Activated CD4-positive, alpha-beta memory T cell treated with anti-CD3 and anti-CD28 coated beads, Interleukin-2, amount 10 ng/mL, durations not matched to agents 7 days and 5 days (primary cell): ENCODE measurements at regions of chr15 and their contacts with region 1.

Region 1: DNA sequence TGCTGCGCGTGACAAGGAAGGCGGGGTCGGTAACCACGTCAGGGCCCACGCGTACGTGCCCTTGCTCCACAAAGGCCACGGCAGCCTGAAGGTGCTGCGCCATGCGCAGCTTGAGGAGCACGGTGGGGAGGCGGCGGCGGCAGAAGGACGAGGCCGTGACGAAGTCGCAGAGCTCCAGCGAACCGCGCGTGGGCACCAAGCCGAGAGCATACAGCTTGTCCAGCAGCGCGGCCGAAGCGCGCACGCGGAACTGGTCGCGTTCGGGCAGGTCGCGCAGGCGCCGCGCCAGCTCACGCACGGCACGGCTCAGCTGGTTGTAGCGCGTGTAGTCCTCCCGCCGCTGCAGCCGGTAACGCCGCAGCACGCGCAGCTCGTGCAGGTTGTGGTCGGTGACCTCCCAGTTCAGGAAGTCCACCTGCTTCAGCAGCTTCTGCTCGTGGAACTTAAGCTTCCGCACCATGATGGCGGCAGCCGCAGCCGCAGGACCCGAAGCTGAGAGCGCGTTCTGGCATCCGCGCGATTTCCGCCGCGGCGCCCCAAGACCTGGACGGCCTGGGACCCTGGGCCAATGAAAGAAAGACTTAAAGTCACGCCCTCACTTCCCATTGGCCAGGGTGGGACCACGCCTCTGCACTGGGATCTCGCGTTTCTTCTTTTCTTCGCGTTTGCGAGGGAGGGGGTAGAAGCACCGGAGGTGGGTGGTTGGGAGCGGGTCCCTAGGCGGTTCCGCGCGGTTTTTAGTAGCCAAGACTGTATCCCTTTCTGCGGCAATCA is at the start of gene IMP3:
- DNase-seq: peak; percentile 96
- H3K4me3 Mint-ChIP-seq: peak within 1 kb of the TSS; percentile 86
- H3K27ac Mint-ChIP-seq: peak within 1 kb of the TSS; percentile 94
- H3K4me1 Mint-ChIP-seq: peaks cover 43% of the 10 kb centered on the region
- H3K27me3 Mint-ChIP-seq: no peaks in the 10 kb centered on the region
- total RNA-seq, gene IMP3: 72.3 to 75.5 TPM

Region 2: GRCh38 chr15:75508840-75509532 is 130.9 kb before region 1 on chr15:
- CTCF ChIA-PET with region 1: interaction called, 46 read pairs
- POLR2A ChIA-PET with region 1: interaction called, 29 read pairs
- DNase-seq: no peak
- H3K4me3 Mint-ChIP-seq: no peak overlapping the region
- H3K27ac Mint-ChIP-seq: no peak overlapping the region
- H3K4me1 Mint-ChIP-seq: no peaks in the 10 kb centered on the region
- H3K27me3 Mint-ChIP-seq: no peaks in the 10 kb centered on the region

Region 3: DNA sequence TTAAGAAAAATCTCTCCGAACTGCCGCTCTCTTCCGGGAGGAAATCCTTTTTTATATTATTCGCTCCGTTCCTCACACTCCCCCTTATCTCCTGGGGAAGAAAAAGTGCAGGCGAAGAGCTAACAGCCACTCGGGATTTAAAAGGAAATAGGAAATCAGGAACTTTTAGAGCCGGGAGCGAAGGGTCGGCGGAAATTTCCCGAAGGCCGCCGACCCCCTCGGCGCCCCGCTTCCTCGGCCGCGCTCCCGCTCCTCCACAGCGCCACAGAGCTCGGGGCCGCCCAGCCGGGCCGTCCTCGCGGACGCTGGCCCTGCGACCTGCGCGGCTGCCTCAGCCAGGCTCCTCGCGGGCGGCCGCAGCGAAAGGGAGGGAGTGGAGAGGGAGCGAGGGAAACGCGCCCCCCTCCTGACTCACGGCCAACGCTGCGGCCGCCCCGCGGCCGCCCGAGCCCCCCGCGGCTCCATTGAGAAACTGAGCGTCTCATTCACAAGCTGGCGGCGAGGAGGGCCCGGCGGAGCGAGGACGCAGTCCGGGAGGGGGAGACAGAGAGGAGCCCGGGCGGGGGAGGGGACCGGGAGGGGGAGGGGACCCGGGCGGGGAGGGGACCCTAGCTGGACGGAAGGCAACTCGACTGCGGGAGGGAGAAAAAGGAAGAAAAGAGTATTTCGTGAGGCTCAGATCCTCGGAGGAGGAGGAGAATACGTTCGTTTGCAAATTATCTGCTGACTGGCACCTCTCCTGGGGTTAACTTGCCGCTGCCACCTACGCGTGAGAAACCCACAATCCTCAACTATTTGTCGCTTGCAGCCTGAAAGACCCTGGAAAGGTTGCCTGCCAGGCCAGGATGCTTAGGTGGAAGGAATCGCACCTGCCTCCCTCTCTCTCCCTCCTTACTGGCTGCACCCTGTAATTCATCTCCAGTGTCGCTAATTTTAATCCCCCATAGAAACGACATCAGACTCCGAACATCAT is 60.7 kb before region 1 on chr15 and contains the start of gene PTPN9:
- CTCF ChIA-PET with region 1: interaction called, 25 read pairs
- POLR2A ChIA-PET with region 1: interaction called, 83 read pairs
- DNase-seq: peak; percentile 81
- H3K4me3 Mint-ChIP-seq: peak within 1 kb of the TSS; percentile 86
- H3K27ac Mint-ChIP-seq: peak within 1 kb of the TSS; percentile 93
- H3K4me1 Mint-ChIP-seq: peaks cover 24% of the 10 kb centered on the region
- H3K27me3 Mint-ChIP-seq: no peaks in the 10 kb centered on the region
- total RNA-seq, gene PTPN9: 41.4 to 41.6 TPM

Region 4: GRCh38 chr15:75597667-75598341 is 42.1 kb before region 1 on chr15:
- CTCF ChIA-PET with region 1: interaction called, 27 read pairs
- POLR2A ChIA-PET with region 1: interaction called, 78 read pairs
- DNase-seq: peak; percentile 77
- H3K4me3 Mint-ChIP-seq: peak overlapping the region; percentile 53
- H3K27ac Mint-ChIP-seq: peak overlapping the region; percentile 96
- H3K4me1 Mint-ChIP-seq: peaks cover 50% of the 10 kb centered on the region
- H3K27me3 Mint-ChIP-seq: no peaks in the 10 kb centered on the region

Region 5: DNA sequence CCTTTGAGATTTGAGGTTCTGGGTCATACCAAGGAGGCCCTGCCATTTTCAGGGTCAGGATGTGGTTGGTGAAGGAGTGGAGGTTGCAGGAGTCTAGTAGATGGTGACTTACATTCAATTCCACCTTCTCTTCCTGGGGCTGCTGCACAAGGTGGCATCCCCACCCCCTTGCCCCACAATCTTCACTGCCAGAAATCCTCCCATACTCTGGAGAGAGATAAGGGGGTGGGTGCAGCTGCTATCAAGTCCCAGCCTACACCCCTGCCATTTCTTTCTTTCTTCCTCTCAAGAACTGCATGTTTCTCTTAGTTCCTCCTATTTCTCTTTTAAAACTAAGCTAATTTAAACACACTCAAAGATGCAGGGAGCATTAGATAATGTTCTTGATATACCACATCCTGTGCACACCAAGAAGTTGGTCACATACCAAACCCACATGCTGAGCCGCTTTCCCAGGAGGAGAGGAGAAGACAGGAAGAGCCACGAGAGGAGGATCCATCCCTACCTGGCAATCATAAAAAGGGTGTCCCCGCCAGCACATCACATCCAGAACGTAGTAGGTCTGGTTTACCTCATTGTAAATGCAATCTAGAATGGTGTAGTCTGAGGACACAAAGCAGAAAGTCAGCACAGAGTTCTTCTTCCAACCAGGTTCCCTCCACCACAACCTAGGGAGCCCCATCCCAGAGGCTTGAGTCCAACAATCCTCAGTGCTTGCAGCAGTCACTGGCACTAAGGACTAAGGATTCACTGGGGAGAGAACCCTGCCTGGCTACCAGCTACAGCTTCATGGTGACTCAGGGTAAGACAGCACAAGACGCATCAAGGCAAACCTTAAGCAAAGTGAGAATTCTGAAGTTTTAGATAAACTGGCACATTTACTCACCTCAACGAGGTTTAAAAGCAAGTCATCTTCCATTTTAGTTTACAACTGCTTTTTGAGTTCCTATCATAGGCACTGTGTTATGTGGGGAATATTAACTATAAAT is 32.9 kb before region 1 on chr15:
- CTCF ChIA-PET with region 1: interaction called, 14 read pairs
- POLR2A ChIA-PET with region 1: interaction called, 78 read pairs
- DNase-seq: peak; percentile 70
- H3K4me3 Mint-ChIP-seq: peak overlapping the region; percentile 60
- H3K27ac Mint-ChIP-seq: peak overlapping the region; percentile 98
- H3K4me1 Mint-ChIP-seq: peaks cover 52% of the 10 kb centered on the region
- H3K27me3 Mint-ChIP-seq: no peaks in the 10 kb centered on the region

Region 6: DNA sequence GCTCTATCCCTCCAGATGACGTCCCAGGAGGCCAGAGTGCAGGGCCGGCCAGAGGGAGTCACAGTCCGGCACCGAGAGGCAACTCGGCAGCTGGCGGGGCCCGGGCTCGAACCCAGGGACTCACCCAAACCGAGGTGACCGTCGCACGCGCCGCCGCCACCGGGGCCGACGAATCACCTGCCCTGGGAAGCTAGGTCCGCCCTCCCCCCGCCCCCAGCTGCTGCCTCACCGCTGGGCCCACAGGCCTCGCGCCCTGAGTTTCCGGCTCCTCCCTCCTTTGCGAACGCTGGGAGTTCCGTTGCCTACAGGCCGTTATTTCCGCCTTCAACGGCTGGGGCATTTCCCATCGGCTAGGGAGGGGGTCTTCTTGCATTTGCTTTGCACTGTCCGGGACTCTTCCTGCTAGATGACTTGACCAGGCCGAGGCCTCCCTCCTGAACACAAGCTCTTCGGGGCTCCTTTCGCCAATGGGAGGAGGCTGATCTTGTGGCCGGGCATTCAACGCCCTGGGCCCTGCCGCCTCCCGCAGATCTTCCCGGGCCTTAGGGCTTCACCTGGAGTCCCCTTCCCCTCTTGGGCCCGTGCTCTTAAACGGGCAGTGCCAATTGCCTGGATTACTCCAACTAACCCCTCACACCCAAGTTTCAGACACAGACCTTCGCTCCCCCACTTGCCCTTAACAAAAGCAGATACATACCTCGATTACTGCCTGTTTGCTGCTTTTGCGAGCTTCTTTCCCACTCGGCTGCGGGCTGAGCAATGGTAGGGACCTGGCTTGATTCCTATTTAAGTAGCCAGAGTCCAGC is 14.2 kb before region 1 on chr15 and contains the start of gene SNUPN:
- CTCF ChIA-PET with region 1: interaction called, 56 read pairs
- POLR2A ChIA-PET with region 1: interaction called, 162 read pairs
- DNase-seq: peak; percentile 96
- H3K4me3 Mint-ChIP-seq: peak within 1 kb of the TSS; percentile 93
- H3K27ac Mint-ChIP-seq: peak within 1 kb of the TSS; percentile 96
- H3K4me1 Mint-ChIP-seq: peaks cover 38% of the 10 kb centered on the region
- H3K27me3 Mint-ChIP-seq: no peaks in the 10 kb centered on the region
- total RNA-seq, gene SNUPN: 29.6 to 30.9 TPM

Region 7: DNA sequence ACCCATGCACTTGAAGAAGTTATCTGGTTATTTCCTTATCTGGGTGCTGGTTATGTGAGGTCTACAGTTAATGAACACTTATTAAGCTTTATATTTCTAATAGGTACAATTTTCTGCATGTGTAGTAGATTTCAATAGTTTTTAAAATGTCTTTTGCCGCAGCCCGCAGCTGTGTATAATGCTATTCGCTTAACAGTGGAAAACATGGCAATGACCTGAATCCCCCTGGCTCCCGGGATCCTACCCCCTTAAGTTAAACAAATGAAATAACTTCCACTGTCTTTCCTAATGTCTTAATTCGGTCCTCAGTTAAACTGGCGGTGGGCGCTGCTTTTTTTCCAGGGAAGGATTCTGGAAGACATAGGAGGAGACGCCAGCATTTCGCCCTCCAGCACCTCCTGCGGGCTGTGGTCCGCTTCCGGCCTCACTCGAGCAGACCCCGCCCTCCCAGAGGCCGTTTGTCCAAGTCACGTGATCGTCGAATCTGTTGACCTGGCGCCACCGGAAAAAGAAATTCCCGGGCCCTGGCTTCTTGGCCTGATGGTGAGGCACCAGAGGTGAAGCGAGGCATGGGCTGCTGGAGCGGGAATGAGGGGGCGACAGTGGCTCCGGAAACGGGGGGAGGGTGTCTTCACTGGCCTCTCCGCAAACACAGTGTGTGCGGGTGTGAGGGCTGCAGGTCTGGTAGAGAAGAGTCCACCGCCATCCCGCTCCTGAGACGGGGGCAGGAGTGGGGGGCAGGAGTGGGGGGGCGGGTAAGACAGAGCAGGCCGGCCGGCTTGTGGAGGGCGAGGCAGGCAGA is 118.4 kb after region 1 on chr15:
- CTCF ChIA-PET with region 1: no interaction called
- POLR2A ChIA-PET with region 1: no interaction called
- DNase-seq: peak; percentile 76
- H3K4me3 Mint-ChIP-seq: peak overlapping the region; percentile 91
- H3K27ac Mint-ChIP-seq: peak overlapping the region; percentile 89
- H3K4me1 Mint-ChIP-seq: peaks cover 17% of the 10 kb centered on the region
- H3K27me3 Mint-ChIP-seq: peaks cover 2% of the 10 kb centered on the region